SK-N-SH (cell line): ENCODE measurements at regions of chr14 and their contacts with region 1.

Region 1: DNA sequence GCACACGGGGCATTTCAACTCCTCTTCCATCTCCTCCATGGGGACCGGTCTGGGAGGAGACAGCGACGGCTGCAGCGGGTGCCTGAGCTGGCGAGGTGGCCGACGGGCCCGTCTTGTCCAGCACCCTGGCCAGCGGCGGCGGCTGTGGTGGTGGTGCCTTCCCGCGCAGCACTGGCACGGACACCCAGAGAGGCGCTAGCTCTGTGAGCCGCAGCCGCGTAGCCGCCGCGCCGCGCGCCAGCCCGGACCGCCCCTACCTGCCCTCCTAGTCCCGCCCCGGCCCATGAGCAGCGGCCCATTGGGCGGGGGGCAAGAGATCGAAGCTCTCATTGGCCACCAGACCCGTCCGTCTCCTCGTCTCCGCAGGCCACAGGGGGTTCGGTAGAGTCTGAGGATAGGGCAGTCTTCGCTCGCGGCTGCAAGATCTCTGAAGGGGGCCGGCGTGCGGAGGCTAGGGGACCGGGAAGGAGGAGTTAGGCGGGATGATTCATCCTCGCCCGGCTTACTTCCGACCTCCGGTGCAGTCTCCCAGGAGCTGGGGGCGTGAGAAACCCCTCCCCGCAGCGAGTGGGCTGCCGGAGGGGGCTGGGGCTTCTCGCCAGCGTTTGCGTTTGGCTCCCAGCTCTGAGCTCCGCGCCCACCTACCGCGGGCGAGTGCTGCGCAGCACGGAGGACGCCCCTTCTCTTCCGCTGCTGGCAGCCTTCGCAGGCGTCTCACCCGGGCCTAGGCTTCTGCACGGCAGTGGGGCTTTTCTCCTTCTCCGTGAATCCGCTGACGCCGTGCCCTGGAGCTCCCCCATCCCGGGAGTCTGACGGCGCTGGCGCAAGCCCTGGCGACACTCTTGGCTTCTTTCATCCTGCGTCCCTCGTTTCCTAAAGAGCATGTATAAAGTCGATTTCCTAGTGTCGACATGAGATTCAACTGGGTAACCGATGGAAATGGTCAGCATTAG is at the start of gene TRIM9:
- DNase-seq: peak; percentile 100
- H3K4me3 ChIP-seq: peak within 1 kb of the TSS; percentile 60 to 82
- H3K27ac ChIP-seq: peak within 1 kb of the TSS; percentile 90 to 92
- H3K4me1 ChIP-seq: peaks cover 6 to 20% of the 10 kb centered on the region in 2 experiments; a peak in 3 of 4 replicates
- H3K27me3 ChIP-seq: no peaks in the 10 kb centered on the region
- CTCF ChIP-seq: no peak
- EP300 ChIP-seq: peak in 1 of 2 experiments; percentile 40; a peak in 1 of 4 replicates
- RAD21 ChIP-seq: 0 out of 2 replicates have a peak, but pooled peaks have one; percentile 2
- polyA plus RNA-seq, gene TRIM9: 3.9 and 4.2 TPM in 2 replicates

Region 2: GRCh38 chr14:51129130-51129529 is 34.0 kb after region 1 on chr14:
- CTCF ChIA-PET with region 1: no interaction called
- POLR2A ChIA-PET with region 1: no interaction called
- DNase-seq: no peak
- H3K4me3 ChIP-seq: no peak overlapping the region
- H3K27ac ChIP-seq: no peak overlapping the region
- H3K4me1 ChIP-seq: no peaks in the 10 kb centered on the region
- H3K27me3 ChIP-seq: no peaks in the 10 kb centered on the region
- CTCF ChIP-seq: no peak
- EP300 ChIP-seq: no peak
- RAD21 ChIP-seq: no peak

Region 3: DNA sequence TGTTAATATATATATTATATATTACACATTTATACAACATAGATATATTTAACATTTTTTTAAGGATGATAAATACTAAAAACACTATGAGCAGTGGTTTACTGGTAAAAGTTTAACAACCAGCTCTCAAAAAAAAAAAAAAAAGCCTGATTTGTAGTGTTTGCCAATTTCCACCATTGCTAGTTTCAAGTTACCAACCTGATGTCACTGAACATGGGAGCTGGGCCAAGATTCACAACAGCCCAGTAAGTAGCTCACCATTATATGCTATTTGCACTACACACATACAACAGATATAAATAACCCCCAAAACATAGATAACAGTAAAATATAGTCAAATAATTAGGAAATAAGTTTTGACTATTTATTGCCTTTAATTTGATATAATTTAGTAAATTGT is 116.0 kb after region 1 on chr14:
- CTCF ChIA-PET with region 1: interaction called, 11 read pairs
- POLR2A ChIA-PET with region 1: interaction called, 5 read pairs
- DNase-seq: no peak
- H3K4me3 ChIP-seq: no peak overlapping the region
- H3K27ac ChIP-seq: no peak overlapping the region
- H3K4me1 ChIP-seq: peaks cover 0 to 17% of the 10 kb centered on the region in 2 experiments; a peak in 2 of 4 replicates
- H3K27me3 ChIP-seq: no peaks in the 10 kb centered on the region
- CTCF ChIP-seq: no peak
- EP300 ChIP-seq: no peak
- RAD21 ChIP-seq: no peak

Region 4: DNA sequence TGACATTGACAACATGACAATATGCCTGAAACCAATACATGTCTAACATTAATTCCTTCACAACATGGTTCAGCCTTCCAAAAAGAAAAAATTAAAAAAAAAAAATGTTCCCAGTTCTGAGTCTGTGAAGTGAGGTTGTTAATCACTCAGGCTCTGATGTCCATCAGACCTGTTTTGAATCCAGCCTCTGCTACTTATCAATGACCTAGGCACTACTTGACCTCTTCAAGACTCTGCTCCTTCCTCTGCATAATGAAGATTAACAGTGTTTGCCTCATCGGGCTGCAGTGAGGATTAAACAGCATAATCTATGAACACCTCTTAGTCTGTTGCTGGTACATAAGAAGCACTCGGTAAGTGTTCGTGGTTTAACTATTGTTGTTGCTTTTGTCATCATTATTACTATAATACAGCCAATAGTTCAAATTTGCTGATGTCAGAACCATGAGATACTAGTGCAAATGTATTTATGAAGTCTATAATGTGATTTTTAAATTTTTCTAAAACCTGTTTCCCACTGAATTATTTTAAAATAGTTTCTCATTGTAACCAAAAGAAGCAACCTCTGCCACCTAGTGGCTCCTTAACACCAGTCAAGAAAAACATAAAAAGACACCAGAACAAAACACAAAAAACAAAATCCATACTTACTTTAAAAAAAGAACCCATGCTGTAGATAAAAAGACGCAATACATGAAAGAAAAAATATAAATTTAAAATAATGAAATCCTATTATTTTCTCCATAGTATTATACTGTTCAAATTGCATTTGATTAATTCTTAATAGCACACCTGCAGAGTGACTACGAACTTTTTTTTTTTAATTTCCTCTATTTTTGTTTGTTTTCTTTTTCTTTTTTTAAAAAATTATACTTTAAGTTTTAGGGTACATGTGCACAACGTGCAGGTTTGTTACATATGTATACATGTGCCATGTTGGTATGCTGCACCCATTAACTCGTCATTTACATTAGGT is 124.6 kb after region 1 on chr14:
- CTCF ChIA-PET with region 1: interaction called, 12 read pairs
- POLR2A ChIA-PET with region 1: no interaction called
- DNase-seq: no peak
- H3K4me3 ChIP-seq: no peak overlapping the region
- H3K27ac ChIP-seq: no peak overlapping the region
- H3K4me1 ChIP-seq: no peaks in the 10 kb centered on the region
- H3K27me3 ChIP-seq: no peaks in the 10 kb centered on the region
- CTCF ChIP-seq: peak; percentile 84
- EP300 ChIP-seq: no peak
- RAD21 ChIP-seq: peak; percentile 80